ENCODE measurements at regions of chr7 and their contacts with region 1.

Region 1: DNA sequence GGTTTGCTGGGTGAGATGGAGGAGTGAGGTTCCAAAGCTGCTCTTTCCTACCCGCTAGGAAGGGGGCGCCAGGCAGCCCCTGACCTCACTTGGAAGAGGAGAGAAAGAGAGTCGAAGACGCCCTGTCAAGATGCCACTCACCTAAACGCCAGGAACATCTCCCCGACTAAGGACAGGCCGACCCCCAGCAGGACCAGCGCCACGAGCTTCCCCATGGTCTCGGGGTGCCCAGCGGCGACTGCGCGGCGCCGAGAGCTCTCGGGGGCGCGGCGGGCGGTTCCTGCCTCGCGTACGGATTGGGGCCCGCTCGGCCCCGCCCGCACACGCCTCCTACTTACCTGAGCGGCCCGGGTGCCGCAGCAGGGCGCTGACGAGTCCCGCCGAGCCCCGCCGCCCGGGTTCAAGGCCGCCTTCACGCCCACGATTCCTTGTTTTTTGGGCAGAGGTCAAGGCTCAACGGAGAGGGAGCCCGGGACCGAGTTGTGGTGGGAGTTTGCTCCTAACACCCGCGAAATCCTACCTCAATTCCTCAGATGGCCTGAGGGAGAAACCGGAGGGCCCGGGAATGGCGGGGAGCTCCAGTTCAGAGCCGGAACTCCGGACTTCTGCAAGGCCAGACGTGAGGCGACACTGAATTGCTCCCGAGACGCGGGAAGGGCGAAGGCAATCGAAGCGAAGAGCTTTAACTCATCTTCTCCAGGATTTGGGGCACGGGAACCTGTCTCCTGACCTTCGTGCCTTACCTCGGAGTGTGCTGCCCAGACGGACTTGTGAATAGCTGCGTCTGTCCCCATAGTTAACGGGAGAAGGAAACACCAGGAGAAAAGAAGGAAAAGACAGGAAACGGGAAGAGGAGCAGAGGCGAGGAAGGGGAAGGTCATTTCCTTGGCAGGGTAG is at the start of gene PON3:
- DNase-seq: peak; percentile 42
- ATAC-seq: peak; percentile 92
- H3K4me3 Mint-ChIP-seq: peak within 1 kb of the TSS; percentile 62
- H3K27ac Mint-ChIP-seq: no peak within 1 kb of the TSS
- H3K4me1 Mint-ChIP-seq: peaks cover 3% of the 10 kb centered on the region
- H3K27me3 Mint-ChIP-seq: peaks cover 35% of the 10 kb centered on the region
- CTCF ChIP-seq: peak; percentile 34
- total RNA-seq, gene PON3: not detected

Region 2: DNA sequence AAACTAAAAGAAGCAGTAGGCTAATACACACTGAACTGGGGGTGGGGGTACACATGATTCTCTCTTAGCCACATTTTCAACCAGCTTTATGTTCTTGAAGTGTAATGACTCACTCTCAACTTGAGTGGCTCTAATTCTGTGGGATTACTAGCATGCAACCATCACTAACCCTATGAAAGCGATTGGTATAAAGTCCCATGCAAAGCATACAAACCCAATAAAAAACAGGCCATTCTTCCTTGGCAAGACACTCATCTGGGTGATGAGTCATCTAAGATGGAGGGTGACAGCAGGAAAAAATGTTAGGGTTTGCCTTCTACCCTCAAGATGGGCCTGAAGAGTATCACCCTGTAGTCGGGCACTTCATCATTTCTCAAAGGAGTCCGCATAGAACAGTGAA is 14.7 kb after region 1 on chr7:
- CTCF ChIA-PET with region 1: interaction called, 21 read pairs
- POLR2A ChIA-PET with region 1: no interaction called
- intact Hi-C with region 1: no loop called
- DNase-seq: no peak
- ATAC-seq: peak; percentile 62
- H3K4me3 Mint-ChIP-seq: no peak overlapping the region
- H3K27ac Mint-ChIP-seq: no peak overlapping the region
- H3K4me1 Mint-ChIP-seq: no peaks in the 10 kb centered on the region
- H3K27me3 Mint-ChIP-seq: no peaks in the 10 kb centered on the region
- CTCF ChIP-seq: no peak

Measured in activated CD8-positive, alpha-beta T cell treated with anti-CD3 and anti-CD28 coated beads for 36 hours (primary cell).